ENCODE measurements at regions of chr1 and their contacts with region 1.

Region 1: GRCh38 chr1:206839857-206840256 is 25.6 kb upstream of the IL20 start:
- DNase-seq: no peak
- ATAC-seq: no peak
- H3K4me3 Mint-ChIP-seq: no peak overlapping the region
- H3K27ac Mint-ChIP-seq: no peak overlapping the region
- H3K4me1 Mint-ChIP-seq: peaks cover 3% of the 10 kb centered on the region
- H3K27me3 Mint-ChIP-seq: no peaks in the 10 kb centered on the region
- CTCF ChIP-seq: no peak

Region 2: DNA sequence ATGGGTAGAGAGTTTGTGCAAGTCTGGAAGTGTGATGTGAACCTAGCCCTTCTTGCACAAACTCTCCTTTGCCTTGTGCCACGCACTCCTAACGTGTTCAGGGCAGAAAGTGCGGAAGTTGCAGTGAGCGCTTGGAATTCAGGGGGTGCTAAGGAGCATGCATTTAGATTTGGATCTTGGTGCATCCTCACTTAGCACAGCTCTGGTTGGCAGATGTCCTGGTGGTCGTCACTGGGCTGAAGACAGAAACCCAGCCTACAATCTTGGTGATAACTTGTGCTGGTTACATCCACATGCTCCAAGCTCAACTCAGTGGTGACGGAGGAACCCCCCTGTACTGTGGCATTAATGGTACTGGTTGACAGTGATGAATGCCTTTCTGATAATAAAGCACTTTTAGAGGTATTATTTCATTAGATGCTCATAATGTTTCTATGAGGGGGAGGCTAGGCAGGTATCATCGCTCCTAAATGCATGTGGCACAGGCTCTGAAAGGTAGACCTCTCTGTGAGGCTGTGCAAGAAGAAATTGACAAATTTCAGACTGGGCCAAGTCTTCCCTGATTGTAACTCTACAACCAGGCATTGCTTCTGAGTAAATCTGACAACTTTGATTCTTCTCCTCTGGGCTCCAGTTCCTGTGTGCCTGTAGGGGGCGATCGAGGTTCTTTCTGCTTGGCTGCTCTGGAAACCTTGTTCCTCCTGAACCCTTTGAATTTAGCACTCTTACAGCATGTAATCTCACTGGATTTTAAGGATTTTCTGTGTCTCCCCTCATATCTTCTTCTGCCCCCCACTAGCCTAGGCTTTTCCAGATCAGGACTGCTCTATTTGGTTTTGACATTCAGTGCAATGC is 114.5 kb before region 1 on chr1:
- CTCF ChIA-PET with region 1: no interaction called
- POLR2A ChIA-PET with region 1: no interaction called
- intact Hi-C with region 1: no loop called
- DNase-seq: no peak
- ATAC-seq: peak; percentile 63
- H3K4me3 Mint-ChIP-seq: no peak overlapping the region
- H3K27ac Mint-ChIP-seq: peak overlapping the region; percentile 63
- H3K4me1 Mint-ChIP-seq: peaks cover 48% of the 10 kb centered on the region
- H3K27me3 Mint-ChIP-seq: no peaks in the 10 kb centered on the region
- CTCF ChIP-seq: no peak

Region 3: GRCh38 chr1:206878456-206878855 is 38.6 kb after region 1 on chr1:
- CTCF ChIA-PET with region 1: no interaction called
- POLR2A ChIA-PET with region 1: no interaction called
- intact Hi-C with region 1: loop called (anchors 5 kb)
- DNase-seq: no peak
- ATAC-seq: peak; percentile 25
- H3K4me3 Mint-ChIP-seq: no peak overlapping the region
- H3K27ac Mint-ChIP-seq: no peak overlapping the region
- H3K4me1 Mint-ChIP-seq: no peaks in the 10 kb centered on the region
- H3K27me3 Mint-ChIP-seq: peaks cover 1% of the 10 kb centered on the region
- CTCF ChIP-seq: no peak

Measured in activated B cell treated with CpG ODN at 0.5 μM for 24 hours (primary cell).